ENCODE measurements at regions of chr4 and their contacts with region 1.

Region 1: DNA sequence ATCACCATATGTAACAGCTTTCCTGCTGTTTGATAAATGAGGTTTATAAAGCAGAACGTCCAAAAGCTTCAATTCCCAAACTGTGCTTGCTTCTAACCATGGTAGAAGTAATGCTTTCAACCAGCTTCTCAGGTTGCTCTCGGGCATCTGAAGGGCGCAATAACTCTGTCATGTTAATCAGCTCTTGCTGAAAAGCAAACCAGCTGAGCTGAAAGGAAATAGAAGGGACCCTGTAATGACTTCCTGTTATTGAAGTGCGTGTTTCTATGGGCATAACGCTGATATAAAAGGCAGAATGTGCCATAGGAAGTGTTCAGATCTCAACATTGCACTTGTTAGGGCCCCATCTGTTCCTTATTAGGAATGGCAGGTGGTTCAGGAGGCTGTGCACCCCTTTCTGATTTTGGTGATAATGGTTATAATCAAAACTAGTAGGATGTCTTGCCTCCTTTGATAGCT is 21.2 kb downstream of the HERC3 start:
- DNase-seq: no peak
- ATAC-seq: peak; percentile 89
- H3K4me3 Mint-ChIP-seq: peak overlapping the region; percentile 70
- H3K27ac Mint-ChIP-seq: peak overlapping the region; percentile 83
- H3K4me1 Mint-ChIP-seq: peaks cover 41% of the 10 kb centered on the region
- H3K27me3 Mint-ChIP-seq: no peaks in the 10 kb centered on the region

Region 2: GRCh38 chr4:88549815-88550214 is 63.6 kb before region 1 on chr4:
- POLR2A ChIA-PET with region 1: no interaction called
- DNase-seq: no peak
- ATAC-seq: no peak
- H3K4me3 Mint-ChIP-seq: no peak overlapping the region
- H3K27ac Mint-ChIP-seq: no peak overlapping the region
- H3K4me1 Mint-ChIP-seq: no peaks in the 10 kb centered on the region
- H3K27me3 Mint-ChIP-seq: peaks cover 2% of the 10 kb centered on the region

Region 3: DNA sequence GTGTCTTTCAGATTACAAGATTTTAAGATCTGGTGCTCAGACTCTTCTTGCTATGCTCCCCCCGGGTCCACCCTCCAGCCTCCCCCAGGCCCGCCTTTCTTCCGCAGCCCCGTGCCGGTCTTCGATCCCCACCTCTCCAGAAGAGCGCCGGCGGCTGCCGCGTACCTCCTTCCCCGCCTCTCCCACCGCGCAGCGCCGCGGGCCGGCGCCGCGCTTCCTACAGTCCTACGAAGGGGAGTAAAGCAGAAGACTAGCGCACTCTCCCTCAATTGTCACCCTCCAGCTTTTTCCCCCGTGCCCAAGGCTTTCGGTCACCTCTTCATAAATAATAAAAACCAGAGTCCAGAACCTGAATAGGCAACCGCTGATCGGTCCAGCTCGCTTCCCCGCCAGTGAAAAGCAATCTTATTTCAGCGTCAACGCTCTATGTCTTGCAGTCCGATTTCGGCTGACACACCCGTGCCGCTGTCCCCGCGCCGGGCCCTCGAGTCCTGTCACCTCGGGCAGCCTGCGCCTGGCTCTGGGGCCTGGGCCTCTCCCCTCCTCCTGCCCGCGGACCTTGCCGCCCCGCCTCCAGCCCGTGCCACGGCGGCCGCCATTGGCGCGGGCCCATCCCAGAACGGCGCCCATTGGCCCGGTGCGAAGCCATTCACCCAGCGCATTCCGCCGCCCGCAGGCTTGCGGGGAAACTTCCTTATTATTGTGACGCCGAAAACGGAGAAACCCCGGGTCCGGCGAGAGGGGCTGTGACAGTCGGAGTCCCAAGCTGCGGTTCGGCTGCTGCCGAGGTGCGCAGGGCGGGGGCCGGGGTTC is 21.5 kb before region 1 on chr4 and contains the start of gene HERC3:
- POLR2A ChIA-PET with region 1: interaction called, 36 read pairs
- DNase-seq: peak; percentile 92
- ATAC-seq: peak; percentile 94
- H3K4me3 Mint-ChIP-seq: peak within 1 kb of the TSS; percentile 97
- H3K27ac Mint-ChIP-seq: peak within 1 kb of the TSS; percentile 85
- H3K4me1 Mint-ChIP-seq: peaks cover 28% of the 10 kb centered on the region
- H3K27me3 Mint-ChIP-seq: peaks cover 10% of the 10 kb centered on the region
- total RNA-seq, gene HERC3: 42.9 to 47.3 TPM

Region 4: GRCh38 chr4:88628759-88629158 is 15.3 kb after region 1 on chr4:
- POLR2A ChIA-PET with region 1: no interaction called
- DNase-seq: no peak
- ATAC-seq: no peak
- H3K4me3 Mint-ChIP-seq: no peak overlapping the region
- H3K27ac Mint-ChIP-seq: no peak overlapping the region
- H3K4me1 Mint-ChIP-seq: peaks cover 1% of the 10 kb centered on the region
- H3K27me3 Mint-ChIP-seq: no peaks in the 10 kb centered on the region

Measured in activated naive CD8-positive, alpha-beta T cell treated with anti-CD3 and anti-CD28 coated beads, Interleukin-2, amount 10 ng/mL, durations not matched to agents 7 days and 5 days (primary cell).